CD4-positive, alpha-beta memory T cell (primary cell): ENCODE measurements at regions of chrX and their contacts with region 1.

Region 1: DNA sequence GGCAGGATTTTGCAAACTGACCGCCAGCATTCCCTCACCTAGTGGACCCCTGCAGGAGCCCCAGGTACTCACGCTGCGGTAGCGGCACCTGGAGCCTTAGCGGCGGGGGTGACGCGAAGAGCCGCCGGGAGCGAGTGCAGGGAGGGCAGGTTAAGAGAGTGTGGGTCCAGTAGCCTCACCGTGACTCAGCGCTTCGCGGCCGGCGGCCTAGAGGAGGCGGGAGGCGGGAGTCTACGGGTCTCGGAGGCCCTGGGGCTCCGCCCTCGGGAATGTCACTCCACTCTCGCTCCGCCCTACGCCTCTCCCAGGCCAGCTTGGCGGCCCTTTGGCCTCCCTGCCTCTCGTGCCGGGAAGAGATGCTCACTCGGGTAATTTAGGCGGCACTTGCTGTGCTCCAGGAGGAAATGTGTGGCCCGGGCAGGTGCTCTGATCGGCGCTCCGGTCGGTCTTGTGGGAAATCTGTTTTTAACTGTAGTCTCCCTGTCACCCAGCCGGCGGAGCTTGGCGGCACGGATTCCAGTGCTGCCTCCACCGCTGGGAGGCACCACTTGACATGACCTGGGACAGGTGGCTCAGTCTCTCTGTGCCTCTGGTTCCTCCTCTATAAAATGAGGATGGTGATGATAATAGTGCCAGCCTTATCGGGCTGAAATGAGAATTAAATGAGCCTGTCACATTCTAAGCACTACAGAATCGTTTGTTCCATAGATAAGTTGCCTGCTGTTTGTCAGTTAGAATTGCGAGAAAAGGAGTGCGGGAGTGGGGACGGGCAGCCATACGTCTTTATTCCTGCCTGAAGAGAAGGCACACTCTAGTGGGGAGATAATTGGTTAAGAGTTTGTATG is at the start of gene PIR:
- DNase-seq: peak; percentile 2 to 37 (median 14)
- H3K4me3 ChIP-seq: peak within 1 kb of the TSS; percentile 23 to 32
- H3K4me3 Mint-ChIP-seq: peak within 1 kb of the TSS; percentile 73 to 88 (median 80)
- H3K27ac ChIP-seq: no peak within 1 kb of the TSS
- H3K27ac Mint-ChIP-seq: no peak within 1 kb of the TSS
- H3K4me1 ChIP-seq: peaks cover 3% of the 10 kb centered on the region
- H3K4me1 Mint-ChIP-seq: peaks cover 4 to 8% (median 5%) of the 10 kb centered on the region in 4 donors
- H3K27me3 ChIP-seq: no peaks in the 10 kb centered on the region
- H3K27me3 Mint-ChIP-seq: peaks cover 0 to 4% of the 10 kb centered on the region in 2 donors
- total RNA-seq, gene PIR: 0.53 TPM in 1 of 2 experiments, not detected in the other

Region 2: GRCh38 chrX:15864629-15865028 is 371.3 kb after region 1 on chrX:
- CTCF ChIA-PET with region 1: no interaction called
- POLR2A ChIA-PET with region 1: no interaction called
- intact Hi-C with region 1: no loop called
- DNase-seq: no peak
- H3K4me3 ChIP-seq: no peak overlapping the region
- H3K4me3 Mint-ChIP-seq: no peak overlapping the region
- H3K27ac ChIP-seq: no peak overlapping the region
- H3K27ac Mint-ChIP-seq: no peak overlapping the region
- H3K4me1 ChIP-seq: no peaks in the 10 kb centered on the region
- H3K4me1 Mint-ChIP-seq: no peaks in the 10 kb centered on the region
- H3K27me3 ChIP-seq: no peaks in the 10 kb centered on the region
- H3K27me3 Mint-ChIP-seq: peaks cover 0 to 5% of the 10 kb centered on the region in 2 donors

Region 3: GRCh38 chrX:15973299-15973698 is 480.0 kb after region 1 on chrX:
- CTCF ChIA-PET with region 1: no interaction called
- POLR2A ChIA-PET with region 1: no interaction called
- intact Hi-C with region 1: loop called (anchors 5 kb)
- DNase-seq: peak in 4 of 5 donors; percentile 1 to 13 (median 8)
- H3K4me3 ChIP-seq: no peak overlapping the region
- H3K4me3 Mint-ChIP-seq: no peak overlapping the region
- H3K27ac ChIP-seq: no peak overlapping the region
- H3K27ac Mint-ChIP-seq: no peak overlapping the region
- H3K4me1 ChIP-seq: no peaks in the 10 kb centered on the region
- H3K4me1 Mint-ChIP-seq: peaks cover 0 to 1% (median 0%) of the 10 kb centered on the region in 4 donors
- H3K27me3 ChIP-seq: no peaks in the 10 kb centered on the region
- H3K27me3 Mint-ChIP-seq: peaks cover 0 to 2% of the 10 kb centered on the region in 2 donors